Heart right ventricle (tissue), 16 donors: ENCODE measurements at regions of chr2 and their contacts with region 1.

Region 1: DNA sequence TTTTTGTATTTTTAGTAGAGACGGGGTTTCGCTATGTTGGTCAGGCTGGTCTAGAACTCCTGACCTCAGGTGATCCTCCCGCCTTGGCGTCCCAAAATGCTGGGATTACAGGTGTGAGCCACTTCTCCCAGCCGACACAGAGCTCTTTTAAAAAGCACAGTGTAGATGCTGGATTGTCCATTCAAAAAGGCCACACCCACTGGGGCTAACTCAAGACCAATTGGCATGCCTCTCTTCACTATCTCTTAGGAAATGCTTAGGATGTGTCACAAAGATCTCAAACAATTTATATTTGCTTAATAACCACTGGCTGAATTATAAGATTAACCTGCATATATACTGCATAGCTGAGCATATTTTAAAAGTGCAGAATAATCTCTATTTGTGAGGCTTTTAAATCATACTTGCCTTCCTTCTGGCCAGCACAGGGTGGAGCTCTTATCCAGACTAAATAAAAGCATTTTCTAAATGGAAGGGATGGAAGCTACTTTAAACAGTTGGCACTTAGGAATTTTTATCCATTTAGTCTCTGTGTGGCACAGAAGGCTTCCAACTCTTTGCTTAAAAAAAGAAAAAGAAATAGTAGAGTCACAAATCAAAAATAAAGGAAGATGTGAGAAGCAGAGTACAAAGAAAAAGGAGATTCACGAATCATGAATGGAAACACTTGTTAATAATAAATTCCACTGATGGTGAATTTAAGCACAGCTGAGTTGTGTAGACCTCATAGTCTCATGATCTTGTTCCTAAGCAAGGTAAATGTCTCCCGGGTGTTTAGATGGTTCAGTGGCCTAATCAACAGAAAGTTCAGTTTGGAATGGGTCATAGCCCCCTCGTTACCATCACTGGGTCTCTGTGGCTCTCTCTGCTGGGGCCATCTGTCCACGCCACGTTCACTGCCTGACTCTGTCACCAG is 22.4 kb downstream of the CRYGD start:
- DNase-seq: no peak
- ATAC-seq: peak in 2 of 8 donors; percentile 35 to 42
- H3K4me3 ChIP-seq: no peak overlapping the region
- H3K27ac ChIP-seq: no peak overlapping the region
- H3K4me1 ChIP-seq: peaks cover 0 to 11% (median 3%) of the 10 kb centered on the region in 9 donors
- H3K27me3 ChIP-seq: peaks cover 0 to 17% (median 0%) of the 10 kb centered on the region in 7 donors
- CTCF ChIP-seq: peak in 4 of 9 donors; percentile 14 to 36 (median 26)

Region 2: GRCh38 chr2:209395652-209396051 is 1293.7 kb after region 1 on chr2:
- intact Hi-C with region 1: loop called in 1 of 10 experiments (anchors 5 kb)
- DNase-seq: no peak
- ATAC-seq: no peak
- H3K4me3 ChIP-seq: no peak overlapping the region
- H3K27ac ChIP-seq: no peak overlapping the region
- H3K4me1 ChIP-seq: no peaks in the 10 kb centered on the region
- H3K27me3 ChIP-seq: no peaks in the 10 kb centered on the region
- CTCF ChIP-seq: no peak